ENCODE measurements at regions of chr7 and their contacts with region 1.

Region 1: DNA sequence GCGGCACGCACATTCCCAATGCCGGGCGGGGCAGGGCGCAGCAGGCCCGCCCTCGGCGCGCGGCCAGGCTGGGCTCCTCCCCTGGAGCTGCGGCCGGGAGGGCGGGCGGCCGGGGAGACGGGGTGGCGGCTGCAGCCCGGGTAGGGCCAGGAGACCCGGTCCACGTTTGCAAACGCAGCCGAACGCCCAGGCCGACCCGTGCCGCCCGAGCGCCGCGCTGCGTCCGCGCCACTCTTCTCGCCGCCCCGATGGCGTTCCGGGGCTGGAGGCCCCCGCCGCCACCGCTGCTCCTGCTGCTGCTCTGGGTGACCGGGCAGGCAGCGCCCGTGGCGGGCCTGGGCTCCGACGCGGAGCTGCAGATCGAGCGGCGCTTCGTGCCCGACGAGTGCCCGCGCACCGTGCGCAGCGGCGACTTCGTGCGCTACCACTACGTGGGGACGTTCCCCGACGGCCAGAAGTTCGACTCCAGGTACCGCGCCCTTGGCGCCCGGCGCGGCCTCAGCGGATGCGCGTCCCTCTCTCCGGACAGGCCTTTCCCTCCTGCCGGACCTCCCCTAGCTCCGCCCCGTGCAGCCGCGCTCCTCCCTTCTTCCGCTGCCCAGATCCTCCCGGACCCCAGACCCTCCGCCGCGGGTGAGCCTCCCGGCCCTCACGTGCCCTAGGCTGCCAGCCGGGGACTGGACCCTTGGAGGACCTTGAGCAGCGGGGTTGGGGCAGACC is at the start of gene FKBP9:
- DNase-seq: peak; percentile 84 to 95
- ATAC-seq: peak; percentile 94 to 97 (median 96)
- H3K4me3 ChIP-seq: peak within 1 kb of the TSS; percentile 75 to 99 (median 92)
- H3K27ac ChIP-seq: peak within 1 kb of the TSS; percentile 93 to 100 (median 98)
- H3K4me1 ChIP-seq: peaks cover 3 to 31% (median 19%) of the 10 kb centered on the region in 9 donors
- H3K27me3 ChIP-seq: peaks cover 0 to 3% (median 0%) of the 10 kb centered on the region in 7 donors
- CTCF ChIP-seq: no peak
- total RNA-seq, gene FKBP9: 103 to 158 (median 122) TPM

Region 2: GRCh38 chr7:32846701-32847100 is 110.8 kb before region 1 on chr7:
- intact Hi-C with region 1: loop called in 1 of 10 experiments (anchors 5 kb)
- DNase-seq: peak; percentile 81 to 91
- ATAC-seq: peak; percentile 96 to 100 (median 98)
- H3K4me3 ChIP-seq: peak overlapping the region in 4 of 10 donors; percentile 3 to 16 (median 10)
- H3K27ac ChIP-seq: no peak overlapping the region
- H3K4me1 ChIP-seq: peaks cover 0 to 10% (median 3%) of the 10 kb centered on the region in 9 donors
- H3K27me3 ChIP-seq: no peaks in the 10 kb centered on the region
- CTCF ChIP-seq: peak; percentile 57 to 96 (median 94)

Region 3: DNA sequence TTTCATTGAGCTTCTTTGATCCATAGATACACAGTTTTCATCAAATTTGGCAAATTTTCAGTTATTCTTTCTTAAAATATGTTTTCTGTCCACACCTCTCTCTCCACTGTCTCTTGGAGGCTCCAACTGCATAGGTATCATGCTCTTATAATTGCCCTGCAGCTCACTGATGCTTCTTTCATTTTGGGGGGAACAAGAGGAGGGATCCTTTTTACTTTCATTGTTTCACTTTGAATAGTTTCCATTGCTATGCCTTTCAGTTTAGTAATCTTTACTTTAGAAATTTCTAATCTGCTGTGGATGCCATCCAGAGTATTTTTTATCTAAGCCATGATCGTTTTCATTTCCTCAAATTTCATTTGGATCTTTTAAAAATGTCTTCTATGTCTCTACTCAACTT is 98.8 kb before region 1 on chr7:
- intact Hi-C with region 1: no loop called
- DNase-seq: no peak
- ATAC-seq: no peak
- H3K4me3 ChIP-seq: no peak overlapping the region
- H3K27ac ChIP-seq: no peak overlapping the region
- H3K4me1 ChIP-seq: peaks cover 0 to 16% (median 8%) of the 10 kb centered on the region in 9 donors
- H3K27me3 ChIP-seq: no peaks in the 10 kb centered on the region
- CTCF ChIP-seq: no peak

Region 4: DNA sequence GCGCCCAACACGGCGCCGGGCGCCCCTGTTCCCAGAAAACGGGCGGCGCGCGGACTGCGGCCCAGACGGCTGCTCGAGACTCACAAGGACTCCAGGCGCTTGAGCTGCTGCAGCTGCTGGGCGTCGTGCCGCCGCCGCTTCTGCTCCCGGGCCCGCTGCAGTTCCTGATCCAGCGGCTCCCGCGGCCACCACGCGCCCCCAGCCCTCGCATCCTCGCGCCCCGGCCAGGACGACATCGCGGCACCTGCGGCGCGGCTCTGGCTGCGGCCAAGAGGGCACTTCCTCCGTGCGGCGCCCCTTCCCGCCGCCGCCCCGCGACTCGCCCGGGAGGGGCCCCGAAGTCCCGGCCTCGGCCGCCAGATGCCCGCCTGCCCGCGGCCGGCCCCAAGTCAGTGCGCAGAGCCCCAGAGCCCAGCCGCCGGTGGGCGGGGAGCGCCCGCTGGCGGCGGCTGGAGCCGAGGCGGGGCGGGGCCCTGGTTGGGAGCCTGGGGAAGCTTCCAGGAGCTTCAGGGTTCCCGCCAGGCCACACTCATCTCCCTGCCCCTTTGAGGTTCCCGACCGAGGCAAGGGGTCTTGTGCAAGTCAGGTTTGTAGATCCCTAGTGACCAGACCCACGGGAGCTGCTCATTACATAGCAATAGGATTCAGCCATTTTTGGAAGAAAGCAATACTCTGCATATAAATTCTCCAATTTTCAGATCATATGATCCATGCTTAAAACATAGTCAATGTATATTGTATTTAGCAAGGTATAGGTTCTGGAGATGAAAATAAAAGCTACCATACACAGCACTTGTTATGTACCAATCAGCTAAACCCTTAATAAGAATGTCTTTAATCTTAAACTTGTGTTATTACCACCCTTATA is 14.5 kb before region 1 on chr7:
- intact Hi-C with region 1: loop called in 3 of 10 experiments (anchors 2 kb)
- DNase-seq: peak; percentile 75 to 85
- ATAC-seq: peak; percentile 93 to 97 (median 96)
- H3K4me3 ChIP-seq: peak overlapping the region; percentile 40 to 99 (median 87)
- H3K27ac ChIP-seq: peak overlapping the region; percentile 76 to 99 (median 98)
- H3K4me1 ChIP-seq: peaks cover 0 to 43% (median 30%) of the 10 kb centered on the region in 9 donors
- H3K27me3 ChIP-seq: no peaks in the 10 kb centered on the region
- CTCF ChIP-seq: peak; percentile 59 to 87 (median 73)

Region 5: GRCh38 chr7:33040803-33041516 is 83.5 kb after region 1 on chr7:
- intact Hi-C with region 1: loop called in 4 of 10 experiments (anchors 5 kb)
- DNase-seq: no peak
- ATAC-seq: peak in 6 of 8 donors; percentile 71 to 84 (median 82)
- H3K4me3 ChIP-seq: peak overlapping the region in 9 of 10 donors; percentile 2 to 67 (median 52)
- H3K27ac ChIP-seq: peak overlapping the region in 8 of 10 donors; percentile 19 to 87 (median 70)
- H3K4me1 ChIP-seq: peaks cover 5 to 72% (median 62%) of the 10 kb centered on the region in 9 donors
- H3K27me3 ChIP-seq: no peaks in the 10 kb centered on the region
- CTCF ChIP-seq: no peak

Region 6: DNA sequence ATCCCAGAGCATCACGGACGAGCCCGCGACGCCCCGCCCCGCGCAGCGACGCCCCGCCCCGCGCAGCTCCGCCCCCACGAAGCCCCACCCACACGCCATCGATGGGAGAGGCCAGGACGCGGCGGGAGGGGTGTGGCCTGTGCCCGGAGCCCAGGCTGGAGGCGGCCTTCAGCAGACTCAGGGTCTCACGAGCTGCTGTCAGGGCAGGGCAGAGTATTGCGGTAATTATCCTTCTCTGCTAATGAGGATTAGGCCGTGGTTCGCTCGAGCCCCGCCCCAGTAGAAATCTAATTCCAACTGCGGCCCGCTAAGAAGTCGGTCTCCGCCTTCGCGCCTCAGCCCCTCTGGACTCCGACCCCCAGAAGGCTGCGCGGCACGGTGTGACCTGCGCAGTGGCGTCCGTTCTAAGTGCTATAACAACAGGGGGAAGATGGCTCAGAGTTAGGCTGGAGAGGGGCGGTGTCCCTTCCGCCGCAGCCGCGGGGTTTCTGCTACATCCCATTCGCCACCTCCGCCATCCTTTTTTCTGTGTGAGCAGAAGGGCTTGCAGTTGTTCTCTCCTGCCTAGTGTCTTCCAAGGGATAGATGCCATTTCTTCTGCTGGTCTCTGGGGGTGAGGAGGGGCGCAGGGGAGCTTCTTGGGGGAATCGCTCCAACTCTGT is 105.4 kb after region 1 on chr7:
- intact Hi-C with region 1: loop called in 1 of 10 experiments (anchors 5 kb)
- DNase-seq: peak; percentile 93 to 95
- ATAC-seq: peak; percentile 99 to 100 (median 99)
- H3K4me3 ChIP-seq: peak overlapping the region; percentile 58 to 95 (median 83)
- H3K27ac ChIP-seq: peak overlapping the region; percentile 85 to 98 (median 94)
- H3K4me1 ChIP-seq: peaks cover 3 to 44% (median 23%) of the 10 kb centered on the region in 9 donors
- H3K27me3 ChIP-seq: no peaks in the 10 kb centered on the region
- CTCF ChIP-seq: no peak

Measured in heart right ventricle (tissue), 16 donors.